Activated T-helper 1 cell treated with anti-CD3 and anti-CD28 coated beads, Interleukin-12 subunit alpha, Interleukin-12 subunit beta, Interleukin-2, Interleukin-4 antibody, amounts not matched to agents 30 ng/mL and 10 ng/mL and 1 ng/mL, durations not matched to agents 14 hours and 24 hours and 36 hours (primary cell): ENCODE measurements at regions of chr20 and their contacts with region 1.

Region 1: GRCh38 chr20:561437-562231 is 18.0 kb upstream of the CSNK2A1 start:
- DNase-seq: peak; percentile 20
- H3K4me3 Mint-ChIP-seq: no peak overlapping the region
- H3K27ac Mint-ChIP-seq: no peak overlapping the region
- H3K4me1 Mint-ChIP-seq: no peaks in the 10 kb centered on the region
- H3K27me3 Mint-ChIP-seq: peaks cover 19% of the 10 kb centered on the region

Region 2: DNA sequence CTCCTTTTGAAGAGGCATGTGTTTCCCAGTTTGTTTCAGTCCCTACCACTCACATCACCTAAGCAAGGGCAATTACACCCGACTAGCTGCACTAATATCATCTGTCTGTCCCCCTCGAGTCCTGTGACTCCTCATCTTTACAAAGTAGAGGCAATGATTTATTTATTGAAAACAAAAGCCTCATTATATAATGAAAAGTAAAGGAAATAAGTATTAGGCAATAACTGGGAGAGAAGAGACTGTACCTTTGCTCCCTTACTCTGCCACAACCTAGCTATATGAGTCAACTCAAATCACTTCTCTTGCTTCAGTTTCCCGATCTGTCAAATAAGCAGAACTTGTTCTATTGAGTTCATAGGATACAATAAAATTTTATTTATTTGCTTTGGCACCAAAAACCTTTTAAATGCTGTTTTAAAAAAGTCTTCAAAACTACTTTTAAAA is 57.0 kb before region 1 on chr20:
- intact Hi-C with region 1: no loop called
- DNase-seq: no peak
- H3K4me3 Mint-ChIP-seq: no peak overlapping the region
- H3K27ac Mint-ChIP-seq: no peak overlapping the region
- H3K4me1 Mint-ChIP-seq: peaks cover 17% of the 10 kb centered on the region
- H3K27me3 Mint-ChIP-seq: no peaks in the 10 kb centered on the region

Region 3: GRCh38 chr20:645318-646106 is 83.9 kb after region 1 on chr20:
- intact Hi-C with region 1: loop called (anchors 1 kb)
- DNase-seq: peak; percentile 63
- H3K4me3 Mint-ChIP-seq: no peak overlapping the region
- H3K27ac Mint-ChIP-seq: no peak overlapping the region
- H3K4me1 Mint-ChIP-seq: peaks cover 6% of the 10 kb centered on the region
- H3K27me3 Mint-ChIP-seq: peaks cover 19% of the 10 kb centered on the region

Region 4: GRCh38 chr20:667391-667964 is 105.8 kb after region 1 on chr20:
- intact Hi-C with region 1: loop called (anchors 2 kb)
- DNase-seq: peak; percentile 37
- H3K4me3 Mint-ChIP-seq: no peak overlapping the region
- H3K27ac Mint-ChIP-seq: no peak overlapping the region
- H3K4me1 Mint-ChIP-seq: peaks cover 7% of the 10 kb centered on the region
- H3K27me3 Mint-ChIP-seq: peaks cover 39% of the 10 kb centered on the region

Region 5: GRCh38 chr20:739736-740135 is 178.1 kb after region 1 on chr20:
- intact Hi-C with region 1: loop called (anchors 1 kb)
- DNase-seq: no peak
- H3K4me3 Mint-ChIP-seq: no peak overlapping the region
- H3K27ac Mint-ChIP-seq: no peak overlapping the region
- H3K4me1 Mint-ChIP-seq: no peaks in the 10 kb centered on the region
- H3K27me3 Mint-ChIP-seq: peaks cover 2% of the 10 kb centered on the region

Region 6: GRCh38 chr20:787825-788224 is 226.2 kb after region 1 on chr20:
- intact Hi-C with region 1: no loop called
- DNase-seq: no peak
- H3K4me3 Mint-ChIP-seq: no peak overlapping the region
- H3K27ac Mint-ChIP-seq: no peak overlapping the region
- H3K4me1 Mint-ChIP-seq: no peaks in the 10 kb centered on the region
- H3K27me3 Mint-ChIP-seq: peaks cover 7% of the 10 kb centered on the region